K562 (cell line): ENCODE measurements at regions of chr12 and their contacts with region 1.

Region 1: DNA sequence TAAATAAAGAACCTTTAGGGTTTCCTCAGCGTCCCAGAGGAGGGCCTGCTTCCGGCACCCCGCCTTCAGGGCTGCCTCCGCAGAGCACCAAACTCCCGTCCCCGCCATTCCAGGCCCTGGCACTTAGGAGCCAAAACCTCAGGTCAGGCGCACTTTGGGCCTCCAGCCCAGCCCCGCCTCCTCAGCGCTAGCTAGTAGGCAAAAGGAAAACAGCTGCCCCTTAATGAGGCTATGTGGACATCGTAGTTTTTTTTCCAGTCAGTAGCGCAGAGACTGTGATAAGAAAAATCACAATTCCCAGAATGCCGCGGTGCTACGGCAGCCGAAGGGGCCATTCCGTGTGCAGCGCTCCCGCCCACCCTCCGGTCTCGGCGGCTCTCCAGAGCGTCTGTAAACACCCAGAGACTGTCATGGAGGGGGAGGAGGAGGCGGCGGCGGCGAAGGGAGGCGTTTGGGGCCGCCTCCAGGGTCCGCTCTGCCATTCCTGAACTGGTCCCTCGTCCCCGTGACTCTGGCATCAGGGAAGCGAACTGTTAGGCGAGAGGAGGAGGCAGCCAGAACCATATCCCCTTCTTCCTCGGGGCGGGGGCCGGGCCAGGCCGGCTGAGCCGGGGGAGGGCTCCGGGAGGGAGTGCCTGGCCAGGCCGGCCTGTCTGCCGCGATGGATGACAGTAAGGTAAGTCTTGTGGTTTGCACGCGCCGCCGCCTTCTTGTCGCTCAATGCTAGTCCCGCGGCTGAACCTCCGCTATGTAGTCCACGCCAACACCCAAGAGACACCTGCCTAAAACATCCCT is at the start of gene CREBL2:
- DNase-seq: peak; percentile 77 to 90 (median 80)
- ATAC-seq: peak; percentile 92
- H3K4me3 ChIP-seq: peak within 1 kb of the TSS; percentile 61
- H3K27ac ChIP-seq: peak within 1 kb of the TSS; percentile 76
- H3K4me1 ChIP-seq: peaks cover 0 to 11% of the 10 kb centered on the region in 2 experiments; a peak in 3 of 5 replicates
- H3K27me3 ChIP-seq: no peaks in the 10 kb centered on the region
- CTCF ChIP-seq: no peak
- EP300 ChIP-seq: no peak
- POLR2A ChIP-seq: peak; percentile 75
- RAD21 ChIP-seq: no peak
- polyA plus RNA-seq, gene CREBL2: 1.7 to 1.9 TPM

Region 2: GRCh38 chr12:12562585-12563261 is 49.0 kb before region 1 on chr12 and contains the start of gene DUSP16:
- CTCF ChIA-PET with region 1: interaction called, 3 read pairs
- POLR2A ChIA-PET with region 1: no interaction called
- in situ Hi-C with region 1: no loop called
- intact Hi-C with region 1: loop called (anchors 5 kb)
- DNase-seq: peak; percentile 81 to 90 (median 84)
- ATAC-seq: peak; percentile 94
- H3K4me3 ChIP-seq: peak within 1 kb of the TSS; percentile 82
- H3K27ac ChIP-seq: peak within 1 kb of the TSS; percentile 97
- H3K4me1 ChIP-seq: peaks cover 9 to 11% of the 10 kb centered on the region in 2 experiments; a peak in 4 of 5 replicates
- H3K27me3 ChIP-seq: no peaks in the 10 kb centered on the region
- CTCF ChIP-seq: peak in 1 of 3 experiments; percentile 27; a peak in 2 of 6 replicates
- EP300 ChIP-seq: no peak
- POLR2A ChIP-seq: no peak
- RAD21 ChIP-seq: no peak
- polyA plus RNA-seq, gene DUSP16: 0.70 to 1.1 TPM

Region 3: DNA sequence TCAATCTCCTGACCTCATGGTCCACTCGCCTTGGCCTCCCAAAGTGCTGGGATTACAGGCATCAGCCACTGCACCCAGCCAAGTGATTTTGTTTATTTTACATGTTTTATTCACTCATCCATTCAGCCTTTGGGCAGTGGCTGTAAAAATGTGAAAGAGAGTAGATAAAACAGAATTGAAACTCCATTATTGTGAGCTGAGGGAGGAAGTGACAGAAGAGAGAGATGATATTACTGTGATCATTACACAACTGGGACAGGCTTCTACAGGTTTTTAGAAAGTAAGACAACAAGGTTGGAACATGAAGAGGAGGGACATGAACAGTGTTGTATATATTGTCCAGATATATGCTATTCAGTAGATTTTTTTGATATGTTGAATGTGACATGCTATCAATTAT is 24.9 kb after region 1 on chr12:
- CTCF ChIA-PET with region 1: no interaction called
- POLR2A ChIA-PET with region 1: no interaction called
- in situ Hi-C with region 1: no loop called
- intact Hi-C with region 1: no loop called
- DNase-seq: no peak
- ATAC-seq: no peak
- H3K4me3 ChIP-seq: no peak overlapping the region
- H3K27ac ChIP-seq: no peak overlapping the region
- H3K4me1 ChIP-seq: no peaks in the 10 kb centered on the region
- H3K27me3 ChIP-seq: no peaks in the 10 kb centered on the region
- CTCF ChIP-seq: no peak
- EP300 ChIP-seq: no peak
- POLR2A ChIP-seq: no peak
- RAD21 ChIP-seq: no peak